Naive thymus-derived CD8-positive, alpha-beta T cell (primary cell): ENCODE measurements at regions of chr11 and their contacts with region 1.

Region 1: DNA sequence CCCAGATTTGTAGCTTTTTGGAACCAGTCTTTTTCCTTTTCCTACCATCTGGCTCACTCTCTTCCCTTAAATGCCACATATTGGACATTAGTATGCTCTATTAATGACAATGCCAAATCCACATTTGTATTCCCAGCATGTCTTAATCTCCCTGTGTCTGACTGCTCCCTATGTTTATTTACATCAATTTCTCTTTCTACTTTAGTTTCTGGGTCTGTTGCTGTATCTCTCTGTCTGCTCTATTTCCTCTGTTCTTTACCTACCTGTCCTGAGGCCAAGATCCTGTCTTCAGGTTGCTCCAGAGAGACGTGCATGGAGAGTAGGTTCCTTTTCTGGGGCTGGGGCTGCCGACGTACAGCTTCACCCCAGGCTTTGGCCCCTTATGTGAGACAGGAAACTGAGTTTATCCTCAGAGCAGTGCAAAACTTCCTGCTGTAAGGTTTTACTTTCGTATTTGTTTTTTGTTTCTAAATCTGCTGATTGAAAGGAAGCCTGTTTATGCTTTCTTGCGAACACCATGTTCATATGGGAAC is 25.6 kb downstream of the OR2AG2 start:
- DNase-seq: peak in 9 of 10 donors; percentile 10 to 66 (median 38)
- ATAC-seq: peak; percentile 85 to 88
- H3K4me3 Mint-ChIP-seq: no peak overlapping the region
- H3K27ac Mint-ChIP-seq: no peak overlapping the region
- H3K4me1 Mint-ChIP-seq: peaks cover 0 to 46% (median 33%) of the 10 kb centered on the region in 4 donors
- H3K27me3 Mint-ChIP-seq: no peaks in the 10 kb centered on the region

Region 2: DNA sequence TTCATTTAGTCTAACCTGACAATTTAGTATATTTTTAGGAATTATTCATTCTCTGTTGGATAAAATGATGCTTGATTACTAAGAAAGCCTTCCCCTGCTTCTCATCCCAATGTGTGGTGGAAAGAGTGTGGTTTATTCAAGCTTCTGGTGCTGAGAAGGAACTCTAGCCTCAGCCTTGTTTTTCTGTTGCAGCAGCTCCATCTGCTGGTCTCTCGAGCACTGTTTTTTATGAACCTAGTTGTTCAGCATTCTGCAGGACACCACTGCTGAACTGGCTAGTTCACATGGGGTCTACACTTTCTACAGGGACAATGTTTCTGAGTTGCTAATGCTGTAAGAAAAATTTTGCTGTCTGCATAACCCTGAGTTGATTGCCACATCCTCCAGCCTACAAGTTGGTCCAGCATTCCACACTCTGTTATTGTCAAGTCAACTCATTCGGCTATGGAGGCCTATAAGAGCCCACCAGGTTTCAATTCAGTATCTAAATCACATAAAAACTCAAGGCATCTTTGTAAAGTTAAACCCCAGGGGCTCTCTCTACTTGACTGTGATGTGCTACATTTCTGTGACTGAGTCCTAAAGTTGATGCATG is 11.3 kb after region 1 on chr11:
- POLR2A ChIA-PET with region 1: interaction called, 18 read pairs
- DNase-seq: peak; percentile 13 to 79 (median 55)
- ATAC-seq: peak; percentile 70 to 96
- H3K4me3 Mint-ChIP-seq: no peak overlapping the region
- H3K27ac Mint-ChIP-seq: peak overlapping the region in 2 of 10 donors; percentile 34 to 81
- H3K4me1 Mint-ChIP-seq: peaks cover 5 to 16% (median 7%) of the 10 kb centered on the region in 4 donors
- H3K27me3 Mint-ChIP-seq: peaks cover 0 to 5% (median 2%) of the 10 kb centered on the region in 5 donors